ENCODE measurements at regions of chr1 and their contacts with region 1.

Region 1: GRCh38 chr1:147527941-147528936 is 13.1 kb upstream of the BCL9 start:
- DNase-seq: no peak
- ATAC-seq: no peak
- H3K4me3 ChIP-seq: no peak overlapping the region
- H3K27ac ChIP-seq: no peak overlapping the region
- H3K4me1 ChIP-seq: no peaks in the 10 kb centered on the region
- H3K27me3 ChIP-seq: peaks cover 23% of the 10 kb centered on the region; the same call in 1 of the 2 replicates
- CTCF ChIP-seq: no peak
- POLR2A ChIP-seq: no peak
- RAD21 ChIP-seq: no peak

Region 2: DNA sequence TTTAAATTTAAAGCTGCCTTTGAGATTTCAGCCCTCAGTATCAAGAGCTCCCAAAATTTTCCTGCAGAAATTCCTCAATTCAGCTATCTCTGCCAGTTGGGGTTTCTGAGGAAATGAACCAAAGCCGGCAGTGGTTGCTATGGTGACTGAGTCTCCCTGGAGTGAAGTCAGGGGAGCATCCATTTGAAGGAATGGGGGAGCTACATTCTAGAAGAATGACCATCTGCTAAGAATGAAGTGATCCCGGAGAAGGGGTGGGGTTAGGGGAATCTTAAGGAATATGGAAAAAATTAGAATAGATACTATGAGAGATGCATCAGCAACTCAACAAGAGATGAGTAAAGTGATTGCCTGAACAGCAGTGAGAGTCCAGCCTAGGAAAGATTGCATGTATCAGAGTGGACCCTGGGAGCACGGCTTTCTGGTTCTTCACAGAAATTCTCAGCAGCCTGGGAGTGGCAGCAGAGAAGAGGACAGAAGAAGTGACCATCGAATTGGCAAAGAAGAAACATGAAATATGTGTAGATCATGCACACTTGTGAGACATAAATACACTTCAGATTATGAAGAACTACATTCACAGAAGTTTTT is 191.1 kb before region 1 on chr1:
- CTCF ChIA-PET with region 1: no interaction called
- POLR2A ChIA-PET with region 1: no interaction called
- RAD21 ChIA-PET with region 1: no interaction called
- intact Hi-C with region 1: no loop called
- DNase-seq: no peak
- ATAC-seq: no peak
- H3K4me3 ChIP-seq: no peak overlapping the region
- H3K27ac ChIP-seq: no peak overlapping the region
- H3K4me1 ChIP-seq: no peaks in the 10 kb centered on the region
- H3K27me3 ChIP-seq: peaks cover 18% of the 10 kb centered on the region
- CTCF ChIP-seq: no peak
- POLR2A ChIP-seq: no peak
- RAD21 ChIP-seq: no peak

Region 3: DNA sequence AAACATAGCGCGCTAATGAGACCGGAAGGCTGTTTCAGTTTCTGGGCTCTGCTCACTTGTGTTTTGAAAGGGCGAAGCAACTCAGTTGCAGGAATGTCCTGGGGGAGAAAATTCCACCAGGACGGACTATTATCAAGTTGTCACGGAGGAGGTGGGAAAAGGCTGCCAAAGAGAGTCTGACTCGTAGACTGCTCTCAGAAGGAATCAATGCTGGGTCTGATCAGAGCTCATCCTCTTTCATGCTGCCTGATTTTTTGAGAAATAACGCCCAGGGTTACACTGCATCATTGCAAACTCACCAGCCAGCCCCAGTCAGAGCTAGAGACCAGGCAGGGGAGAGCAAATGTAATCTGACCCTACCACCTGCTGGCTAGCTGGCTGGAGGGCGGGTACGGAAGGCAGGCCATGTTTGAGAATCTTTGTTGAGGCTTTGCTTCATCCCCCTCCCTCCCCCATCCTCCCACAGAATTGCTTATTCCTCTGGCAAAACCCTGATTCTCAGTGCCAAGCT is 23.4 kb before region 1 on chr1:
- CTCF ChIA-PET with region 1: no interaction called
- POLR2A ChIA-PET with region 1: no interaction called
- RAD21 ChIA-PET with region 1: no interaction called
- intact Hi-C with region 1: loop called (anchors 2 kb)
- DNase-seq: no peak
- ATAC-seq: peak; percentile 82
- H3K4me3 ChIP-seq: no peak overlapping the region
- H3K27ac ChIP-seq: no peak overlapping the region
- H3K4me1 ChIP-seq: peaks cover 9 to 15% of the 10 kb centered on the region in 2 experiments; a peak in 3 of 4 replicates
- H3K27me3 ChIP-seq: no peaks in the 10 kb centered on the region
- CTCF ChIP-seq: no peak
- POLR2A ChIP-seq: no peak
- RAD21 ChIP-seq: peak; percentile 17; the same call in 1 of the 2 replicates

Region 4: GRCh38 chr1:147515046-147515869 is 13.0 kb before region 1 on chr1:
- CTCF ChIA-PET with region 1: no interaction called
- POLR2A ChIA-PET with region 1: no interaction called
- RAD21 ChIA-PET with region 1: no interaction called
- intact Hi-C with region 1: no loop called
- DNase-seq: peak; percentile 62
- ATAC-seq: peak; percentile 94
- H3K4me3 ChIP-seq: no peak overlapping the region
- H3K27ac ChIP-seq: no peak overlapping the region
- H3K4me1 ChIP-seq: peaks cover 2 to 9% of the 10 kb centered on the region in 2 experiments; a peak in 3 of 4 replicates
- H3K27me3 ChIP-seq: no peaks in the 10 kb centered on the region
- CTCF ChIP-seq: peak; percentile 9 to 83 (median 47); a peak in 3 of 6 replicates
- POLR2A ChIP-seq: no peak
- RAD21 ChIP-seq: peak; percentile 91

Region 5: DNA sequence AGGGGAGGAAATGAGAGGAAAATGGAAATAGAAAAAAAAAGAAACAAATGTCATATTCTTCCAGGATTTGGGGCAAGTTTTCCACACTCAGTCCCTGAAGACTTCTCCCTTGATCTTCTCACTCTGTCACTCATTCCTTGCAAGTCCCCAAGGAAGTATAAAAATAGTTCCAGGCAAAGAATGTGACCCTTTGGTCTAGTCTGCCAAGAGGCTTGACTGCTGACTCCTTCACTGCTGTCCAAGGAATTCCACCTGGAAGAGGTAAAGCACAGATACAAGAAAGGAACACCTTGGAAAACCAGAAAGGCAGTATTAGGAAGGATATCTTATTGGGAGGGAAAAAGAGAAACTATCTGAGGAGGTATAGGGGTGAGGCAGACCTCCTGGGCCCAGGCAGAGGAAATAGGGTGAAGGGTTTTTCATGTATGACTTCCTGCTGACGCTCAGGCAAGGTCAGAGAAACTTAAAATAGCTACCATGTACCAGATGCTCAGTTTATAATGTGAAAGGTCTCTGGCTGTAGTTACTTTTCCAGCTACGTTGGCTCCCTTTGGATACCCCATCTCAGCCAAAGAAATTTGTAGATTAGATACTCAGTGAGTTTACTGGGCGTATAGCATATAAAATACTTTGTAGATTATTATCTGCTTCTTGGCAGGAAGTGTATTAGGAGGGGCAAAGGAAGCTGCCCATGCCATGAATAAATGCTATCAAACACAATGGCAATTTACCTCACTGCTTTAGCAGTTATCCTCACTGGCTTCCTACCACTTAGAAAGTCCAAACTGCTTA is 234.2 kb after region 1 on chr1:
- CTCF ChIA-PET with region 1: no interaction called
- POLR2A ChIA-PET with region 1: no interaction called
- RAD21 ChIA-PET with region 1: no interaction called
- intact Hi-C with region 1: no loop called
- DNase-seq: no peak
- ATAC-seq: no peak
- H3K4me3 ChIP-seq: no peak overlapping the region
- H3K27ac ChIP-seq: no peak overlapping the region
- H3K4me1 ChIP-seq: peaks cover 4 to 12% of the 10 kb centered on the region in 2 experiments; a peak in 3 of 4 replicates
- H3K27me3 ChIP-seq: no peaks in the 10 kb centered on the region
- CTCF ChIP-seq: no peak
- POLR2A ChIP-seq: no peak
- RAD21 ChIP-seq: no peak

Measured in HCT116 (cell line).